Common myeloid progenitor, CD34-positive (primary cell): ENCODE measurements at regions of chr5 and their contacts with region 1.

Region 1: DNA sequence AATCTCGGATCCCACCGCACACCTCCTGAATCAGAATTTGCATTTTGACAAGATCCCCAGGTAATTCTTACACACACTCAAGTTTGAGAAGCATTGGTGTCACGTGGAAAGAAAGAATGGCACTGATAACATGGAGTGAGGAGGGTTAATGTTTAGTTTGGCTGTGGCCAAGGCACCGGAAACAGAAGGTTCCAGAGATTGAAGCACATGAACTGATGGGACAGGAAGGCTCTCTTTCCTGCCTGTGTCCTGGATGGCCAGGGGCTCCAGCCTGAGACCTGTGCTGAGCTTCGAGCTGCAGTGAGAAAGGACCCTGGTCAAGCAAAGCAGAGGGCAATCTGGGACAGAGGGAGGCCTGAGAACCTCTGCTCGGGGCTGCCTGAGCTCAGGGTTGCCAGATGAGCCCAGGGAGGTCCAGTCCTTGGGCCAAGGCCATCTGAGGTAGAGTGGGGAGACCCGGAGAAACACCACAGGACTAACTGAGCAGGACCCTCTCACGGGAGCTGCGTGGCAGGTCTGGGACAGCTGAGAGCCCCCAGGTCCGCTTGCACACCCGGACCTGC is 27.3 kb downstream of the AFAP1L1 start:
- DNase-seq: peak; percentile 82 to 98 (median 97)
- H3K4me3 ChIP-seq: peak overlapping the region in 3 of 7 experiments; percentile 52 to 64 (median 53)
- H3K27ac ChIP-seq: no peak overlapping the region
- H3K4me1 ChIP-seq: peaks cover 9 to 55% (median 37%) of the 10 kb centered on the region in 4 experiments
- H3K27me3 ChIP-seq: no peaks in the 10 kb centered on the region

Region 2: GRCh38 chr5:149288436-149288835 is 10.5 kb before region 1 on chr5:
- CTCF ChIA-PET with region 1: interaction called, 11 read pairs
- POLR2A ChIA-PET with region 1: interaction called, 3 read pairs
- DNase-seq: no peak
- H3K4me3 ChIP-seq: no peak overlapping the region
- H3K27ac ChIP-seq: no peak overlapping the region
- H3K4me1 ChIP-seq: peaks cover 2 to 24% (median 17%) of the 10 kb centered on the region in 4 experiments
- H3K27me3 ChIP-seq: no peaks in the 10 kb centered on the region